ENCODE measurements at regions of chr18 and their contacts with region 1.

Region 1: GRCh38 chr18:644395-645004 is 13.0 kb upstream of the TYMS start:
- DNase-seq: peak; percentile 45
- ATAC-seq: peak; percentile 61
- H3K4me3 Mint-ChIP-seq: no peak overlapping the region
- H3K27ac Mint-ChIP-seq: no peak overlapping the region
- H3K4me1 Mint-ChIP-seq: peaks cover 8% of the 10 kb centered on the region
- H3K27me3 Mint-ChIP-seq: peaks cover 34% of the 10 kb centered on the region

Region 2: GRCh38 chr18:582465-582864 is 62.0 kb before region 1 on chr18:
- CTCF ChIA-PET with region 1: no interaction called
- DNase-seq: no peak
- ATAC-seq: no peak
- H3K4me3 Mint-ChIP-seq: no peak overlapping the region
- H3K27ac Mint-ChIP-seq: no peak overlapping the region
- H3K4me1 Mint-ChIP-seq: no peaks in the 10 kb centered on the region
- H3K27me3 Mint-ChIP-seq: peaks cover 3% of the 10 kb centered on the region

Region 3: DNA sequence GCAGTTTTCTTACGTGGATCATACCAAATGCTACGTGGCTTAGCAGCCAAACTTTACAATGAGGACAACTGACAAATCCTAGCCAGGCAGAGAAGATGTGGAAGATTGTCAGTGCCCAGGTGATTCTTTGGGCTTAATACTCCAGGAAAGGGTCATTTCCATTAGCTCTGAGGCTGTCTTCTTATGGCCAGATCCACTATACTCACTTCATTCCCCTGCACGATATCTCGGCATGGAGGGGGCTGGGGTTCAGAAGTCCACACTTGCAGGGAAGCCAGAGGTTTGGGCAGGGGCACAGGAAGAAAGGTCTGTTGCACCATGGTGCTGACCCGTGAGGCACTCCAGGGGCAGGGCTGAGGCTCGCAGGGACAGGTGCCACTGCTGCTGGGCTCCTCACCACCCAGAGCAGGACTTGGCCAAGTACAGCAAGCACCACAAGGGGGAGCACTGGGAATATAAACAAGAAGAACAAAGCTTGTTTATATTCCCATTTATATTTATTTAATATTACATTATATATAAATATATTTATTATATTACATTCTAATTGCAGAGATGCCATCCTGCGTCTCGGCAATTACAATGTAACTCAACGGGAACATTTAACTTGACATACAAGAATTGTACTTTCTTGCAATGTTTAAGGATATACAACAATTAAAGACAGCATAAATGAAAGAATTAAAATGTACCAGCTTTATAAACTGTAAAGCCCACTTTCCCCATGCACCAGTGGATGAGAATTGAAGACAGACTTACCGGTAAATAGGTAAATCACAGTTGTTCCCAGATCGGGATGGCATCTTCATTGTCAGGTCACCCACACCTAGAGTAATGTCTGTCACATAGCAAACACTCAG is 20.5 kb before region 1 on chr18:
- CTCF ChIA-PET with region 1: interaction called, 28 read pairs
- DNase-seq: peak; percentile 75
- ATAC-seq: peak; percentile 83
- H3K4me3 Mint-ChIP-seq: no peak overlapping the region
- H3K27ac Mint-ChIP-seq: no peak overlapping the region
- H3K4me1 Mint-ChIP-seq: no peaks in the 10 kb centered on the region
- H3K27me3 Mint-ChIP-seq: peaks cover 36% of the 10 kb centered on the region

Measured in activated CD8-positive, alpha-beta memory T cell treated with anti-CD3 and anti-CD28 coated beads, Interleukin-2, amount 10 ng/mL, durations not matched to agents 7 days and 5 days (primary cell).